B cell (primary cell): ENCODE measurements at regions of chr11 and their contacts with region 1.

Region 1: GRCh38 chr11:554824-555472 is 5.6 kb downstream of the LMNTD2 start:
- DNase-seq: peak; percentile 89
- ATAC-seq: peak; percentile 92
- H3K4me3 ChIP-seq: peak overlapping the region in 4 of 5 experiments; percentile 37 to 62 (median 52)
- H3K4me3 Mint-ChIP-seq: peak overlapping the region; percentile 71
- H3K27ac ChIP-seq: no peak overlapping the region
- H3K27ac Mint-ChIP-seq: no peak overlapping the region
- H3K4me1 ChIP-seq: peaks cover 15 to 24% of the 10 kb centered on the region in 2 donors
- H3K4me1 Mint-ChIP-seq: peaks cover 15% of the 10 kb centered on the region
- H3K27me3 ChIP-seq: peaks cover 0 to 12% (median 3%) of the 10 kb centered on the region in 4 experiments
- H3K27me3 Mint-ChIP-seq: no peaks in the 10 kb centered on the region
- CTCF ChIP-seq: peak; percentile 65

Region 2: DNA sequence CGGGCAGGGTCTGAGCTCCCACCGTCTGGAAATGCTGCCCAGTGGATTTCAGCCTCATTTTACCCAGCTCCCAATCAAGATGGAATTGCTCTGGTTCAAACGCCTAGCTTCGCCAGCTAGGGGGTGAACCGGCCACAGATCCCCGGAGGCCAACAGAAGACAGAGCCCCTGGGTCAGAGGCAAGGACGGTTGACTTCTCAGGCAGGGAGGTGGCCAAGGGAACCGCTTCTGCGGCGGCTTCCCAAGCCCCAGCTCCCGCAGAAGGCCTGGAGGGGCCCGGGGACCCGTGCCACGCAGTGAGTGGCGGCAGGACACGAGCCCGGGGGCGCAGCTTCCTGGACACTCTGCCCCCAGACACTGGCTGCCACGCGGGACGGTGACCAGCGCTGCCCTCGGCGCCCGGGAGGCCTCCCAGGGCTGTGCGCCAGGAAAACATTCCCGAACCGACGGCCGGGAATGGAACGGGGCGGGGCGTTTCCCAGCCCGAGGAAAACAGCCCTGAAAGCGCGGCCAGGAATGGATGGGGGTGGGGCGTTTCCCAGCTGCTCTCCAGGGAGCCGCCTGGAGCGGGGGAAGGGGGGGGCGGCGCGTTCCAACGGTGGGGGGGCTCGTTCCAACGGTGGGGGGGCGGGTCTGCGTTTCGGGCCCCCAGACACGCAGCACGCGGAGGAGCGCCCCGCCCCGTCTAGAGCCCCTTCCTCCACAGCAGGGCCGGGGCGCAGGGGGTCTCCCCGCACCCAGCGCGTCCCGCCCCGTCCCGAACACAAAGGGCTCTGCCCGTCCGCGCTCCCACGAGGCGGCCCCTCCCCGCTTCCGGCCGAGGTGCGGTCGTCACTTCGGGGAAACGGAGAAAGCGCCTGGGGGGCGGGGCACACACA is 199.1 kb before region 1 on chr11:
- CTCF ChIA-PET with region 1: no interaction called
- POLR2A ChIA-PET with region 1: no interaction called
- intact Hi-C with region 1: no loop called
- DNase-seq: peak; percentile 85
- ATAC-seq: peak; percentile 56
- H3K4me3 ChIP-seq: peak overlapping the region in 4 of 5 experiments; percentile 41 to 53 (median 43)
- H3K4me3 Mint-ChIP-seq: peak overlapping the region; percentile 88
- H3K27ac ChIP-seq: peak overlapping the region; percentile 81 to 85
- H3K27ac Mint-ChIP-seq: peak overlapping the region; percentile 90
- H3K4me1 ChIP-seq: peaks cover 13 to 20% of the 10 kb centered on the region in 2 donors
- H3K4me1 Mint-ChIP-seq: peaks cover 18% of the 10 kb centered on the region
- H3K27me3 ChIP-seq: no peaks in the 10 kb centered on the region
- H3K27me3 Mint-ChIP-seq: no peaks in the 10 kb centered on the region
- CTCF ChIP-seq: no peak

Region 3: GRCh38 chr11:568306-569157 is 13.6 kb after region 1 on chr11:
- CTCF ChIA-PET with region 1: interaction called, 11 read pairs
- POLR2A ChIA-PET with region 1: no interaction called
- intact Hi-C with region 1: loop called (anchors 1 kb)
- DNase-seq: peak; percentile 96
- ATAC-seq: peak; percentile 91
- H3K4me3 ChIP-seq: peak overlapping the region; percentile 30 to 85 (median 68)
- H3K4me3 Mint-ChIP-seq: peak overlapping the region; percentile 83
- H3K27ac ChIP-seq: peak overlapping the region; percentile 50 to 67
- H3K27ac Mint-ChIP-seq: peak overlapping the region; percentile 37
- H3K4me1 ChIP-seq: peaks cover 10 to 13% of the 10 kb centered on the region in 2 donors
- H3K4me1 Mint-ChIP-seq: peaks cover 9% of the 10 kb centered on the region
- H3K27me3 ChIP-seq: peaks cover 0 to 6% (median 2%) of the 10 kb centered on the region in 4 experiments
- H3K27me3 Mint-ChIP-seq: no peaks in the 10 kb centered on the region
- CTCF ChIP-seq: no peak

Region 4: GRCh38 chr11:575996-576768 is 21.2 kb after region 1 on chr11 and contains the start of gene PHRF1:
- CTCF ChIA-PET with region 1: interaction called, 4 read pairs
- POLR2A ChIA-PET with region 1: interaction called, 18 read pairs
- intact Hi-C with region 1: loop called (anchors 1 kb)
- DNase-seq: peak; percentile 98
- ATAC-seq: peak; percentile 87
- H3K4me3 ChIP-seq: peak within 1 kb of the TSS; percentile 65 to 95 (median 86)
- H3K4me3 Mint-ChIP-seq: peak within 1 kb of the TSS; percentile 93
- H3K27ac ChIP-seq: peak within 1 kb of the TSS; percentile 97 to 98
- H3K27ac Mint-ChIP-seq: peak within 1 kb of the TSS; percentile 99
- H3K4me1 ChIP-seq: peaks cover 30 to 44% of the 10 kb centered on the region in 2 donors
- H3K4me1 Mint-ChIP-seq: peaks cover 44% of the 10 kb centered on the region
- H3K27me3 ChIP-seq: peaks cover 0 to 18% (median 8%) of the 10 kb centered on the region in 4 experiments
- H3K27me3 Mint-ChIP-seq: peaks cover 15% of the 10 kb centered on the region
- CTCF ChIP-seq: no peak
- total RNA-seq, gene PHRF1: 57.9 and 63.5 TPM in 2 replicates

Region 5: DNA sequence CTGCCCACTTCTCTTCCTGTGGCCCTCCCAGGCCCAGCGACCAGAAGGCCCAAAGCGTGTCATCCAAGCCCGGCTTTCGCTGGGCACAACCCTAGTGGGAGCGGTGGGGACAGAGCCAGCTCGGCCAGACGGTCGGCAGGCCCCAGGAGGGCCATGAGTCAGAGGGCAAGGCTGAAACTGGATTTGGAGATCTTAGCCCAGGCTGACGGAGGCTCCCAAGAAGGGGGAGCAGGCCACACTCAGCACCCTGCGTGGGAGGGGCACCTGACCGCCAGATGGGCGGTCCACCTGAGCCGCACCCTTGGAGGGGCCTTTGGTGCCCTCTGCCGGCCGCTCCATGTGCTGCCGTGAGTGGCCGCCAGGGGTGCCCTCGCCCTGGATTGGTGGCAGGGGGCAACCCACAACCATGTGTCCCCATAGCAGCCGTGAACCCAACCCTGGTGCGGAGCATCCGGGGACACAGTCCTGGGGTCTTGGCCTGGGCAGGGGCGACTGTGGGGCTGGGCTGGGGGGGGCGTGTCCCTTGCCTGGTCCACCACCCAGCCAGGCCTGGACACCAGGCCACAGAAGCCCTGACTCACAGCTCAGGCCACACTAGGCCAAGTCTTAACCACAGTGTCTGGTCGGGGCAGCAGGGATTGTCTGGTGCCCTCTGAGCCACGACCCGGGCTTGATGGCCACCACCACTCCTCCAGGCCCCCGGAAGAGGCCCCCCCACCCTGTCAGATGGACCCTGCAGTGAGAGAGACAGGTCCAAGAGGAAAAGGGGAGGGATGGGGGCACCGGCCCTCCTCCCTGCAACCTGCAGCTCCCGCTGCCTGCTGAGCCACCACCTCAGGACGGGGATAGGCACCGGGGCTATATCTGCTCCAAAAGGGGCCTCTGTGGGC is 173.2 kb after region 1 on chr11:
- CTCF ChIA-PET with region 1: interaction called, 52 read pairs
- POLR2A ChIA-PET with region 1: interaction called, 9 read pairs
- intact Hi-C with region 1: loop called (anchors 1 kb)
- DNase-seq: peak; percentile 85
- ATAC-seq: peak; percentile 85
- H3K4me3 ChIP-seq: no peak overlapping the region
- H3K4me3 Mint-ChIP-seq: no peak overlapping the region
- H3K27ac ChIP-seq: no peak overlapping the region
- H3K27ac Mint-ChIP-seq: no peak overlapping the region
- H3K4me1 ChIP-seq: peaks cover 14 to 29% of the 10 kb centered on the region in 2 donors
- H3K4me1 Mint-ChIP-seq: peaks cover 12% of the 10 kb centered on the region
- H3K27me3 ChIP-seq: peaks cover 0 to 24% (median 0%) of the 10 kb centered on the region in 4 experiments
- H3K27me3 Mint-ChIP-seq: peaks cover 4% of the 10 kb centered on the region
- CTCF ChIP-seq: peak; percentile 97

Region 6: GRCh38 chr11:765025-765801 is 210.3 kb after region 1 on chr11:
- CTCF ChIA-PET with region 1: interaction called, 16 read pairs
- POLR2A ChIA-PET with region 1: interaction called, 4 read pairs
- intact Hi-C with region 1: loop called (anchors 1 kb)
- DNase-seq: peak; percentile 81
- ATAC-seq: peak; percentile 86
- H3K4me3 ChIP-seq: no peak overlapping the region
- H3K4me3 Mint-ChIP-seq: no peak overlapping the region
- H3K27ac ChIP-seq: peak overlapping the region in 1 of 2 donors; percentile 12
- H3K27ac Mint-ChIP-seq: peak overlapping the region; percentile 50
- H3K4me1 ChIP-seq: no peaks in the 10 kb centered on the region
- H3K4me1 Mint-ChIP-seq: peaks cover 2% of the 10 kb centered on the region
- H3K27me3 ChIP-seq: no peaks in the 10 kb centered on the region
- H3K27me3 Mint-ChIP-seq: no peaks in the 10 kb centered on the region
- CTCF ChIP-seq: peak; percentile 74